Astrocyte of the cerebellum (primary cell): ENCODE measurements at regions of chr17 and their contacts with region 1.

Region 1: DNA sequence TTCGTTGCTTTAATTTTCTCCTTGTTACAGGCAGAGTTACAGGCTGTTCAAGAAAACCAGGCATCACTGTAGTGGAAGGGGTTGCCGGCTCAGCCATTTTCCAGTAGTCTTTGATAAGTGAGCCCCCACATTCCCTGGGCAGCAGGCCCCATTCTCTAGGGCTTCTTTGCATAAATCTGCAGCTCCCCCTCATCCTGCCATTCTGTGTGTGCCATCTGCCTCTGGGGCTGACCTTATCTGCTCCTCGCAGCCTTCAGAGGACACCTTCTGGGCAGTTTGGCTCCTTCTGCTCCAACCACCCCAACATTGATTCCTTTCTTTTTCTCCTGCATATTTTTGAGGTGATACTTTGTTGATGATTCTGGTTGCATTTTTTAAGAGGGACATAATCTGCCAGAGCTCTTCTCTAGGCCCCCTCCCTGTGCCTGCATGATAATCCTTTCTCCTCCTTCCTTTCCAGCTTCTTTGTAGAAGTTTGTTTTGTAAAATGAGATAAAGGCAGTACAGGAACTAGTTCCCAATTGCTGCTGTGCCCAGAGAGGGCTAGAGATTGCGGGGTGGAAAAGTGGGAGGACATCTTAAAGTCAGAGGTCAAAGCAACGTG is 17.1 kb downstream of the RND2 start:
- DNase-seq: no peak
- H3K4me3 ChIP-seq: no peak overlapping the region
- CTCF ChIP-seq: no peak

Region 2: DNA sequence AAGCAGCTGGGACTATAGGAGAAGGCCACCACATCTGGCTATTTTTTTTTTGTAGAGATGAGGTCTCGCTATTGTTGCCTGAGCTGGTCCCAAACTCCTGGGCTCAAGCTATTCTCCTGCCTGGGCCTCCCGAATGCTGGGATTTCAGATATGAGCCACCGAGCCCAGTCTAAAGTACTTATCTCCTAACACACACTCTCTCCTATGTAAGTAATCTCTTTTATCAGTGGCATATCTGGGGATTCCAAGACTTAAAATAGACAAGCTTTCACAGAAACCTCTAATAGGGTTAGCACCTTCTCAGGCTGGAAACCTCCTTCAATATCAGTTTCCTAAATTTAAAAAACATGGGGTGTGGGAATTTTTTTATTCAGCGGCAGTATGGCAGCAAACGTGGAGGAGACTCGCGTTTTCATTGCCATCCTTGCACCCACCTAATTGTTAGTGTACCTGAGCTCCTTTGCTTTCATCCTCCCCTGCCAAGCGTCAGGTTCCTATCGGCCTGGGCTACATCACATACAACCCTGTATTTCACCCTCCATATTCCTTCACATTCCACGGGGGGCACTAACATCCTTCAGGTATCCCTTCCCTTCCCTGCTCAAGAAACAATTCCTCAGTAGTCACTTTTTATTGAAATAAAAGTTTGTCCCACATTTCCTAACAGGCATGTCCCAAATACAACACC is 298.4 kb before region 1 on chr17:
- in situ Hi-C with region 1: no loop called
- DNase-seq: no peak
- H3K4me3 ChIP-seq: peak overlapping the region; percentile 85
- CTCF ChIP-seq: peak; percentile 45

Region 3: DNA sequence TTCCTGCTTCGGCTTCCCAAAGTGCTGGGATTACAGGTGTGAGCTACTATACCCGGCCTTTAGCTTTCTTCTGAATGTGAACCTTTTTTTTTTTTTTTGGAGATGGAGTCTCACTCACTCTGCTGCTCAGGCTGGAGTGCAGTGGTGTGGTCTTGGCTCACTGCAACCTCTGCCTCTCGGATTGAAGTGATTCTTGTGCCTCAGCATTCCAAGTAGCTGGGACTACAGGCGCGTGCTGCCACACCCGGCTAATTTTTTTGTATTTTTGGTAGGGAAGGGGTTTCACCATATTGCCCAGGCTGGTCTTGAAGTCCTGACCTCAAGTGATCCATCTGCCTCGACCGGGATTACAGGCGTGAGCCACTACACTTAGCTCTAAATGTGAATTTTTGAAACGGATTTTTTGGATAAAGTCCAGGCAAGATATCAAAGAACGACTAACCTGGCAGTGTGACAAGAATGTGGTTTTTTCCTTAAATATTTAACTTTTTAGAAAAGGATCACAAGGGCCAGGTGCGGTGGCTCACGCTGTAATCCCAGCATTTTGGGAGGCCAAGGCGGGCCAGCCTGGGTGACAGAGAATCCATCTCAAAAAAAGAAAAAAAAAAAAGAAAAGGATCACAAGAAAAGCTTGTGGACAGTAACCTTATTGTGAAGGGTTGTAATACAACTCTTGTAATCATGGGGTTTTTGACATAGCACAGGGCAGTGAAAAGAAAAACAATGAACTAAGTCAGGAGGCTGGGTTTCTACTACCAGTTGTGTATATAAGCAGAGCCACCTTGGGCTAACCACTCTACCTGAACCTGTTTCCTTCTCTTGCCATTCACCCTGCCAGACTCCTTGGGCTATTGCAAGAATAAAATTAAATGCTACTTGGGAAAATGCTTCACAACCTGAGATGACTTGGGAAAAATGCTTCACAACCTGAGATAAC is 76.8 kb after region 1 on chr17:
- in situ Hi-C with region 1: loop called (anchors 5 kb)
- DNase-seq: no peak
- H3K4me3 ChIP-seq: no peak overlapping the region
- CTCF ChIP-seq: no peak